ENCODE measurements at regions of chr2 and their contacts with region 1.

Region 1: DNA sequence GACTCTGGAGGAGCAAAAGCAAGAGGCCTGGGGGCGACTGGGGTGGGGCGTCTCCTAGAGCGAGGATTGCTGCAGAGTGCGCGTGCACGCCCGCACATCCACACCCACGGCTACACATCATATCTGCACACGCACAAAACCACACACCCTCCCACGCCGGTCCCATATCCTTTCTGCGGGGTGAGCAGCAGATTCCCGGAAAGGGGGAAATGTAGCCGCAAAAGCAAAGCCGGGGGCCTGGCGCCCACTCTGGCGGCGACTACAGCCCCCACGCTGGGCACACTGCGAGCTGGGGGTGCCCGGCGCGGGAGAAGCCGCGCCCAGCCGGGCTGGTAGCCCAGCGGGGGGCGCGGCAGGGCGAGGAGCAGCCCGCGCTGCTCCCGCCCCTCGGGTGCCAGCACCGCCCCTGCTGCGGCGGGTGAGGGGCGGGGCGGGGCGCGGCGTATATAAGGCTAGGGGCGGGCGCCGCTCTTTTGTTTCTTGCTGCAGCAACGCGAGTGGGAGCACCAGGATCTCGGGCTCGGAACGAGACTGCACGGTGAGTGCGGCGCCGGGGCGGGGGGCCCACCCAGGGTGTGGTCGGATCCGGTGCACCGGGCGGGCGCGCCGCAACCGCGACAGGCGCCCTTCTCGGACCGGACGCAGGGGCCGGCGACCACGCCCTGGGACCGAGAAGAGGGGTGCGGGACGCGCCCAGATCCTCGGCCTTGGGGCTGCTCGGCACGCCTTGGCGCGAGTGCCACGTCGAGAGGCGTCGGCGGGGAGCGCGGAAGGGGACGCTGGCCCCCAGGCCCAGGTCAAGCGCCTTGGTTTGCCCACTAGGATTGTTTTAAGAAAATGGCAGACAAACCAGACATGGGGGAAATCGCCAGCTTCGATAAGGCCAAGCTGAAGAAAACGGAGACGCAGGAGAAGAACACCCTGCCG is at the start of gene TMSB10:
- DNase-seq: no peak
- H3K4me3 ChIP-seq: peak within 1 kb of the TSS; percentile 97
- CTCF ChIP-seq: no peak

Region 2: DNA sequence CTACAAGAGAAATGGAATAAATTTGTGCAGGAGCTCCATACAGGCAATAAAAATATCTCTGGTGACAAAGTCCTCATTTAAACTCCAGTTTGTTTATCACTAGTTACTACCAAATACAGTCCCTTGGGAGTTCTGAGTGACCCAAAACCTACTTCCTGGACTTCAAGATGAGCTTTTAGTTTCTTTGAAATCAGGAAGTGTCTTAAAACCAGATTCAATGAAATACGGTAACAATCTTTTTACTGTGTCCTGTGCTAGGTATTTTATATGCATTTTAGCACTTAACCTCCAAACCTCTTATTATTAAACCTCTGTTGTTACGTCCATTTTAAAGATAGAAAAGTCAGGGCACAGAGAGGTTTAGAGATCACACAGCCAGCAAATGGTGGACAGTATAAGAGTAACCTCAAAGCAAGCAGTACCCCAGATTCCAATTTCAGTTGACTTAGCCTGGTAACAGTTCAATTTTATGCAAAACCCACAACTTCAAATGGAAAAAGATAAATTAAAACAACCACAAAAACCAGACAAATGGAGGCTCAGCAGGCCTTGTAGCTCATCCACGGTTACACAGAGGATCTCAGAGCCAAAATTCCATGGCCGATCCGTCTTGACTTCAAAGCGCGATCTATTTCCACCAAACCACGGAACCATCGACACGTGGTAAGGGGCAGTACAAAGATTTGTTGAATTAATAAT is 64.2 kb after region 1 on chr2:
- in situ Hi-C with region 1: loop called (anchors 10 kb)
- DNase-seq: no peak
- H3K4me3 ChIP-seq: peak overlapping the region; percentile 77
- CTCF ChIP-seq: no peak

Region 3: DNA sequence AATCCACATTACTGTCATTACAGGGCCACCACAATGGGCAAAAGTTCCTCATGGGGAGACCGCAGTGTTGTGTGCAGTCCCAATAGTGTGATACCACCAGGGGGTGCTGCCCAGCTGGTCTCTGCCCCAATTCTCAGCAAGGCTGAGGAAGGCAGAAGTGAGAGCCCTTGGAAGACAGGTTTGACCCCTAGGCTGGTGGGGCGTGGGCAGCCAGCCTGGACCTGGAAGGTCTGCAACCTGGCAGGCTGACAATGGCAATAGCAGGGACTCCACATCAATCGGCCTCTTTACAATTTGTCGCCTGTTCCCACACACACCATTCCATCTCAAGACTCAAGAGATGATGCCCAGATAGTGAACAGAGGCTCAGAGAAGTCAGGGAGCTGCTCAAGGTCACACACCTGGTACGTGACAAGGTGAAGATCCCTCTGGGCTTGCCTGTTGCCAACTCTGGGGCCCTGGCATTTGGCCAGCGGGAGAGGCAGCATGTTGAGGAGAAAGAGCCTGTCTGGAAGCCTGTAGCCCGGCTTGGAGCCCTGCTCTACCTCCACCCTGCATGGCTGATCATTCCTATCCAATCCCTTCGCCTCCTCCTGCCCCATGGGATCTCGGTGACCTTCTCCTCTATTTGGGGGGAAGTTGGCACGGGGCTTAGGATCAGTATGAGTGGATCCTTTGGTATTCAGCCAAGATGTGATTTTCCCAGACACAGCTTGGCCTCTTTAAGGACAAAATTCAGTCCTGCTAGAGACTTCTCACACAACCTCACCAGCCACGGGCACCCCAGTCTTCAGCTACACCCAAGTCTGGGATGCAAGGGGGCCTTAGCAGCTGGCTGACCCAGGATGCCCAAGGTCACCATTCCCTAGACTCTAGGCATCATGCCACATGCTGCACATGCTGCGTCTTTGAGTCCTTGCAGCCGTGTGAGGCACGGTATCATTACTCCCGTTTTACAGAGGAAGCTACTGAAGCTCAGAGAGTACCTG is 845.4 kb after region 1 on chr2:
- in situ Hi-C with region 1: no loop called
- DNase-seq: no peak
- H3K4me3 ChIP-seq: no peak overlapping the region
- CTCF ChIP-seq: peak; percentile 91

Measured in astrocyte of the cerebellum (primary cell).